SK-N-SH (cell line): ENCODE measurements at regions of chr22 and their contacts with region 1.

Region 1: GRCh38 chr22:33579448-33580093 is 340.7 kb downstream of the LARGE1 start:
- DNase-seq: peak; percentile 67
- H3K4me3 ChIP-seq: no peak overlapping the region
- H3K27ac ChIP-seq: no peak overlapping the region
- H3K4me1 ChIP-seq: no peaks in the 10 kb centered on the region
- H3K27me3 ChIP-seq: no peaks in the 10 kb centered on the region
- CTCF ChIP-seq: peak; percentile 55
- EP300 ChIP-seq: no peak
- RAD21 ChIP-seq: peak; percentile 83

Region 2: DNA sequence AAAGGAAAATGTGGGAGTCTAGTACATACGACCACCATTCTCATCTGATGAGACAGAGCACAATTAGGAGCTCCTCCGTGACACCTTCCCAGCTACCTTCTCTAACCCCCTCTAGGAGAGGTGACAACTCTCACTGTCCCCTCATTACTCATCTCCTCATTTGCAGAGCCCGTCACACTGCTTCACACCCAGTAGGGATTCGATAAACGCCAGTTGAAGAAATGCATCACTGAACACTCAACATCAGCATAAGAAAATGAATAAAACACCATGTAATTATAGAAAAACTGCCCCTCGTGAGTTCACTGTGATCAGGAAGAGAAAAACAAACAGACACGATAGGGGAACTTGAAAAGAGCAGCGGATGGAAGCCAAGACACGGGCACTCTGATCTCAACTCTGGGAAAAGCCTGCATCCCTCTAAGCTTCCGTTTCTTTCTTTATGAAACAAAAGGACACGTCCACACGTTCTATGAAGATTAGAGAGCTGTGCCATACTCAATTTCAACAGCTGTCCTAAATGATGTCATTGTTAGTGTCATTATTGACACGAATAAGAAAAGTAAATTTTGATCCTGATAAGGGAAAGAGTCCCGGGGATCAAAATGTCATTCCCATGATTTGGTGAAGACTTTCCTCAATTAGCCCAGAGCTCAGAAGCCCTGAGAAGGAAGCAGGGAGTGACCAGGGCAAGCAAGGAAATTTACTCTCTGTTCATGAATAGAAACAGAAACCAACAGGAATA is 16.2 kb before region 1 on chr22:
- CTCF ChIA-PET with region 1: interaction called, 14 read pairs
- POLR2A ChIA-PET with region 1: no interaction called
- DNase-seq: no peak
- H3K4me3 ChIP-seq: no peak overlapping the region
- H3K27ac ChIP-seq: no peak overlapping the region
- H3K4me1 ChIP-seq: no peaks in the 10 kb centered on the region
- H3K27me3 ChIP-seq: no peaks in the 10 kb centered on the region
- CTCF ChIP-seq: no peak
- EP300 ChIP-seq: no peak
- RAD21 ChIP-seq: no peak

Region 3: DNA sequence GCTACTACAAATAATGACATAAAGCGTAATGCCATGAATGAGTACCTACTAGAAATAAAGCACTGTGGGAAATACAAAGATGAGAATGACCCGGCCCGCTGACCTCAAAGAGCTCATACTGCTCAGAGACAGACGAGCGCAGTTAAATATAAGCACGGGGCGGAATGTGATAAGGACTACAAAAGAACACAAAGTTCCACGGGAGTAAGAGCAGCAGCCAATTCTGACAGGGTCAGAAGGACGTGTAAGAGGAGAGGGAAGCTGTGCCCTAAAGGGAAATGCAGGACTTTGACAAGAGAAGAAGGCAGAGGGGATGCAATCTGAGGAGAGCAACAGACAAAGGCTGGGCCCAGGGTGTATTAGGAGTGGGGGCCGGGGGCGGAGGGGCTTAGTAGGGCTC is 26.1 kb after region 1 on chr22:
- CTCF ChIA-PET with region 1: no interaction called
- POLR2A ChIA-PET with region 1: no interaction called
- DNase-seq: no peak
- H3K4me3 ChIP-seq: no peak overlapping the region
- H3K27ac ChIP-seq: no peak overlapping the region
- H3K4me1 ChIP-seq: no peaks in the 10 kb centered on the region
- H3K27me3 ChIP-seq: no peaks in the 10 kb centered on the region
- CTCF ChIP-seq: no peak
- EP300 ChIP-seq: no peak
- RAD21 ChIP-seq: no peak